ENCODE measurements at regions of chr2 and their contacts with region 1.

Region 1: GRCh38 chr2:172102391-172103278 is at the start of gene DLX2:
- DNase-seq: peak; percentile 61 to 94 (median 84)

Region 2: DNA sequence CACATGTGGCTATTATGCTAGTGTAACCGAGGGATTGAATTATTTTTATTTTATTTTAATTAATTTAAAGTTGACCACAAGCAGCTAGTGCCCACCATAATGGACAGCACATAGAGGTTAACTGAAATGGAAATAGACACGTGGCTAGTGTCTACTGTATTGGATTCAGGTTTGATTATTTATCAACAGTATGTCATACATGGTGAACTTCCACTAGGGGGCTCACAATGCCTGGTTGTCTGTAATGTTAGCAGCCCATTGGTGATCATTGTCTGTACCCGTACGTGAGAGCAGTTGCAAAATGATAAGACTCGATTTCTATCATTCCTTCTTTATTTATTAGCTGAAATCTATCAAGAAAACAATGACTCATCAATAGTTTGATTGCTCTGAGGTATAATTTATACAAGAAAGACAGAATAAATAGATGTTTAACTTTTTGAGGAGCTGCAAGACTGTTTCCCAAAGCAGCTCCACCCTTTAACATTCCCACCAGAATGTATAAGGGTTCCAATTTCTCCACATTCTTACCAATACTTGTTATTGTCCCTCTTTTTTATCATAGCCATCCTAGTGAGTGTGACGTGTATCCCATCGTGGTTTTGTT is 503.8 kb before region 1 on chr2:
- intact Hi-C with region 1: loop called (anchors 10 kb)
- DNase-seq: peak in 38 of 42 donors; percentile 19 to 86 (median 57)

Region 3: GRCh38 chr2:171703574-171704347 is 398.9 kb before region 1 on chr2:
- intact Hi-C with region 1: loop called (anchors 10 kb)
- DNase-seq: peak in 3 of 42 donors; percentile 12 to 35 (median 34)

Region 4: DNA sequence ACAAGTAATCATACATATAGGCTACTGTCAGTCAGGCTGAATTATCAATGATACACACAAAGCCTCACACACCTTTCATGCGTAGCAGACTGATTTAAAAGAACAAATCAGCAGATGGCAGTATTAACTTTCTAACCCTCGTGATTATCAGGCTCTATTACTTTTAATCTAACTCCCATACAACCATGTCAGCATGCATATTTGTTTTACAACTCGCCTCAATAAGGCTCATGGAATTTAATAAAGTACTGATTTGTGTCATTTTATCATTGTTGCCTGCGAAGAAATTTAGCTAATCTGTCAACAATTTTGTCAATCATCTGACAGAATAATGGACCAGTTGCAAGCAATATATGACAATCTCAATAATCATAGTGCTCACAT is 291.4 kb before region 1 on chr2:
- intact Hi-C with region 1: loop called (anchors 10 kb)
- DNase-seq: no peak

Region 5: GRCh38 chr2:171922230-171923022 is 180.2 kb before region 1 on chr2 and contains the start of gene HAT1:
- intact Hi-C with region 1: loop called (anchors 10 kb)
- DNase-seq: peak; percentile 96 to 99 (median 98)

Region 6: DNA sequence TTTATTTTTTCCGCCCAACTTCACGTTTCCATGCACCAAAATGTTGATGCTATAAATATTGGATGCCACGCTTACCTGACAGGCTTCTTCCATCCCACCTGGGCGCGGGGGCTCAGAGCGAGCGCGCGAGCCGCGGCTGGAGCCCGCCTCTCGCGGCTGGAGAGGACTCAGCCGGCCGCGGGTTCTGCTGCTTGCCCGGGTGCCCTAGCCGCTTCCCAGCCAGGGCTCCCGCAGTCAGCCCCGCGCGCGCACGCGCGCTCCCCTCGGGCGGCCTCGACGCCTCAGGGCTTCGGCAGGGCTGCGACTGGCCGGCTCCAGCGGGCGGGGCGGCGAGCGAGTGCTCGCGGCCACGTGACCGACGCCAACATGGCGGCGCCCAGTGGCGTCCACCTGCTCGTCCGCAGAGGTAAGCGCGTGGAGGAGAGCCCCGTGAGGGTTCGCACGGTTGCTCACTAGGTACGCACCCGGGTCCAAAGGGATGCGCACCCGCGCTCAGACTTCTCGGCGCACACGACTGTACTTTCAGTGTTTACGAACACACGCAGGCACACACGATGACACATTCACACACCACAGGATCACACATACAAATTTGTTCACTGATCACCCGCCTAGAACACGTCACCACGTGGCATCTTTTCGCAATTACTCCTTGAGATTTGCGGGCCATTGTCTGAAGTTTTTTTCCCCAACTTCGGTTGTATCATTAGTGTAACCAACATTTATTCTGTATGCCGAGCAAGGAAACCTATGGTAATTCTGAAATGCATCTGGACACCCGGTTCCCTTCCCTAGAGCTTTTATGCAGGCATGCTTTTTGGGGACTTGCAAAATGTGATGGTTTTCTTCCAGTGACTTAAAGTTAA is 102.8 kb before region 1 on chr2 and contains the start of gene METAP1D:
- intact Hi-C with region 1: loop called (anchors 10 kb)
- DNase-seq: peak; percentile 78 to 97 (median 94)

Measured in head of caudate nucleus (tissue), 42 donors.